GM10248 (cell line): ENCODE measurements at regions of chr1 and their contacts with region 1.

Region 1: GRCh38 chr1:110859062-110859461 is 13.9 kb upstream of the CD53 start:
- DNase-seq: no peak
- CTCF ChIP-seq: no peak

Region 2: DNA sequence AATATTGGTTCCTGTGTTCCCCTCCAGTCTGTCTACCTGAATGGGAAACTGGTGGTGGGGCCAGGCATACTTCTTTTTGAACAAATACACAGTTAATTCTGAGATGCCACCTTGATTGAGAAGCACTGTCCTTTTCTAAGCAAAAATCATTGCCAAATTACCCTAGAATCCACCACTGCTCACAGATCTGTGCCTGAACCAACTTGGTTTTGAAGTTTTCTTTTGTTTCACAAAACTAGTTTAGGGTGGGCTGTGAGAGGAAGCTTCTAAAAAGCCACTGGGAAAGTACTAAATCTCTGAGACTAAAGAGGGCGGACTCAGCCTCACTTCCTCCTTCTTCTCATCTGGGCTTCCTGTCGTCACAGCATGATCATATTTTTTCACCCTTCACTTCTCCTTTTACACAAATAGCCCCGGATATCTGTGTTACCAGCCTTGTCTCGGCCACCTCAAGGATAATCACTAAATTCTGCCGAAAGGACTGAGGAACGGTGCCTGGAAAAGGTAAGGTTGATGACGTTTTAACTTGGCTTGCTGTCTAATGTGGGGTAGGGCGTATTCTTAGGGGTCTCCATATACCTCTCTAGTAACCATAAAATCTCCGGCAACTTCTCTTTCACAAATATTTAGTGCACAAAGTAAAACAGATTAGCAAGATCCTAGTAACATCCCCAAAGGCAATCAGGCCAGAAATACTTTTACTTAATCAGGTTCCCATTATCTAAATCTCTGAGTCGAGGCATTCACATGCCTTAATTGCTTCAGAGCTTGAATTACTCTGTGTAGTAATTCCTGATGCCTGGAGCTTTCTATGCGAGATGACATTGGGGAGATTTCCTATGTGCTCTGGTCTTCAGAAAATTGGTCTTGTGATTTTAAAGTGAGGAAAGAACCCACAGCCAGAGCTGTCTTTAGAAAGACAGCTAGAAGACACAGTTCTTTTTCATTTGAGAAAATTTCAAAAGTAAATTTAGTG is 14.0 kb after region 1 on chr1 and contains the start of gene CD53:
- CTCF ChIA-PET with region 1: interaction called, 20 read pairs
- POLR2A ChIA-PET with region 1: no interaction called
- DNase-seq: peak; percentile 56
- CTCF ChIP-seq: no peak